CD4-positive, alpha-beta memory T cell (primary cell): ENCODE measurements at regions of chr9 and their contacts with region 1.

Region 1: GRCh38 chr9:86948074-86948929 is 996 bp upstream of the GAS1 start:
- DNase-seq: peak; percentile 66 to 78 (median 73)
- H3K4me3 ChIP-seq: peak overlapping the region; percentile 57 to 60
- H3K4me3 Mint-ChIP-seq: peak overlapping the region; percentile 89 to 94 (median 91)
- H3K27ac ChIP-seq: no peak overlapping the region
- H3K27ac Mint-ChIP-seq: peak overlapping the region; percentile 44 to 88 (median 76)
- H3K4me1 ChIP-seq: peaks cover 14% of the 10 kb centered on the region
- H3K4me1 Mint-ChIP-seq: peaks cover 10 to 21% (median 11%) of the 10 kb centered on the region in 4 donors
- H3K27me3 ChIP-seq: peaks cover 17% of the 10 kb centered on the region
- H3K27me3 Mint-ChIP-seq: peaks cover 10 to 11% of the 10 kb centered on the region in 2 donors

Region 2: GRCh38 chr9:85940832-85941621 is 1007.3 kb before region 1 on chr9 and contains the start of gene NAA35:
- CTCF ChIA-PET with region 1: no interaction called
- POLR2A ChIA-PET with region 1: interaction called, 3 read pairs
- intact Hi-C with region 1: loop called (anchors 5 kb)
- DNase-seq: peak; percentile 99
- H3K4me3 ChIP-seq: peak within 1 kb of the TSS; percentile 43 to 73
- H3K4me3 Mint-ChIP-seq: peak within 1 kb of the TSS; percentile 85 to 95 (median 89)
- H3K27ac ChIP-seq: peak within 1 kb of the TSS; percentile 87
- H3K27ac Mint-ChIP-seq: peak within 1 kb of the TSS in 6 of 7 donors; percentile 91 to 99 (median 96)
- H3K4me1 ChIP-seq: peaks cover 45% of the 10 kb centered on the region
- H3K4me1 Mint-ChIP-seq: peaks cover 12 to 19% (median 16%) of the 10 kb centered on the region in 4 donors
- H3K27me3 ChIP-seq: no peaks in the 10 kb centered on the region
- H3K27me3 Mint-ChIP-seq: no peaks in the 10 kb centered on the region
- total RNA-seq, gene NAA35: 24.8 to 27.8 TPM

Region 3: DNA sequence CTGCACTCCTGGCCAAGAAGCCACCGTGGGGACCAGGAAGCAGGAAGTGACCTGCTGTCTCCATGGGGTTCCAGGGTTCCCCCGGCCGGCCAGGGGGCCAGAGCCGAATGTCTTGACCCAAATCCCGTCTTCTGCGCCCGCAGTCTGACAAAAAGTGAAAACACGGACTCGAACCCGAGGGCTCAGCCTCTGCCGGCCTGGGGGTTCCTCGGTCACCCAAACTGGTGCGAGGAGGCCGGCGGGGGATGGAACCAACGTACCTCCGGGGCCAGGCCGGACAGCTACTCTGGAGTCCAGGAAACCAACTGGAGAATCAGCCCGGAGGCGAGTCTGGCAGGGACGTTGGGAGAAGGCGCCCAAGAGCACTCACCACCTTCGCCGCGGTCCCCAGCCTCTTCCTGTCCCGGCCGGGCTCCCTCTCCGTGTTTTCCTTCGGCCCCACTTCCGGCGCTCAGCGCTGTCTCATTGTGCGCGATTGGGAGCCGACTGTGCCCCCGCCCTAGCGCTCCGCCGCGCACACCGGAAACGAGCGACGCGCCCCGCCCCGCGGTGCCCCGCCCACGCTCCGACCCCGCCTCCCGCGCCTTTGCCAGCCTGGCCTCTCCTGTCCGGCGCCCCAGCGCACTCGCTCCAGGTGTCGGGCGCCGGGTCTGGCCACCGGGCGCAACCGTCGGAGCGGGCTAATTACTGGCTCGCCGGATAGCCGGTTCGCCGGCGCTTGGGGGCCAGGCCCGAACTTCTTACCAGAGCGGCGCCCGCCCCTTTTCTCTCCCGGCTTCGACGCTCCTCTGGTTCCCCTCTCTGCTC is 594.1 kb before region 1 on chr9 and contains the start of gene TUT7:
- CTCF ChIA-PET with region 1: no interaction called
- POLR2A ChIA-PET with region 1: no interaction called
- intact Hi-C with region 1: loop called (anchors 1 kb)
- DNase-seq: peak; percentile 92 to 96 (median 93)
- H3K4me3 ChIP-seq: peak within 1 kb of the TSS; percentile 69 to 75
- H3K4me3 Mint-ChIP-seq: peak within 1 kb of the TSS; percentile 91 to 98 (median 97)
- H3K27ac ChIP-seq: peak within 1 kb of the TSS; percentile 84
- H3K27ac Mint-ChIP-seq: peak within 1 kb of the TSS; percentile 85 to 99 (median 97)
- H3K4me1 ChIP-seq: peaks cover 46% of the 10 kb centered on the region
- H3K4me1 Mint-ChIP-seq: peaks cover 23 to 60% (median 43%) of the 10 kb centered on the region in 4 donors
- H3K27me3 ChIP-seq: no peaks in the 10 kb centered on the region
- H3K27me3 Mint-ChIP-seq: no peaks in the 10 kb centered on the region
- total RNA-seq, gene TUT7: 60.2 to 64.1 TPM

Region 4: GRCh38 chr9:87324613-87325194 is 376.4 kb after region 1 on chr9:
- CTCF ChIA-PET with region 1: interaction called, 9 read pairs
- POLR2A ChIA-PET with region 1: no interaction called
- intact Hi-C with region 1: loop called (anchors 5 kb)
- DNase-seq: peak in 4 of 5 donors; percentile 23 to 43 (median 30)
- H3K4me3 ChIP-seq: no peak overlapping the region
- H3K4me3 Mint-ChIP-seq: no peak overlapping the region
- H3K27ac ChIP-seq: no peak overlapping the region
- H3K27ac Mint-ChIP-seq: no peak overlapping the region
- H3K4me1 ChIP-seq: no peaks in the 10 kb centered on the region
- H3K4me1 Mint-ChIP-seq: peaks cover 0 to 1% (median 0%) of the 10 kb centered on the region in 4 donors
- H3K27me3 ChIP-seq: no peaks in the 10 kb centered on the region
- H3K27me3 Mint-ChIP-seq: peaks cover 2 to 10% of the 10 kb centered on the region in 2 donors

Region 5: GRCh38 chr9:88388172-88388885 is 1440.0 kb after region 1 on chr9 and contains the start of gene SPIN1:
- CTCF ChIA-PET with region 1: no interaction called
- POLR2A ChIA-PET with region 1: no interaction called
- intact Hi-C with region 1: loop called (anchors 5 kb)
- DNase-seq: peak; percentile 67 to 89 (median 84)
- H3K4me3 ChIP-seq: peak within 1 kb of the TSS; percentile 57 to 77
- H3K4me3 Mint-ChIP-seq: peak within 1 kb of the TSS; percentile 91 to 96 (median 94)
- H3K27ac ChIP-seq: peak within 1 kb of the TSS; percentile 65
- H3K27ac Mint-ChIP-seq: peak within 1 kb of the TSS; percentile 94 to 98 (median 96)
- H3K4me1 ChIP-seq: peaks cover 13% of the 10 kb centered on the region
- H3K4me1 Mint-ChIP-seq: peaks cover 11 to 46% (median 24%) of the 10 kb centered on the region in 4 donors
- H3K27me3 ChIP-seq: no peaks in the 10 kb centered on the region
- H3K27me3 Mint-ChIP-seq: no peaks in the 10 kb centered on the region
- total RNA-seq, gene SPIN1: 34.1 to 39.0 TPM